ENCODE measurements at regions of chr3 and their contacts with region 1.

Region 1: DNA sequence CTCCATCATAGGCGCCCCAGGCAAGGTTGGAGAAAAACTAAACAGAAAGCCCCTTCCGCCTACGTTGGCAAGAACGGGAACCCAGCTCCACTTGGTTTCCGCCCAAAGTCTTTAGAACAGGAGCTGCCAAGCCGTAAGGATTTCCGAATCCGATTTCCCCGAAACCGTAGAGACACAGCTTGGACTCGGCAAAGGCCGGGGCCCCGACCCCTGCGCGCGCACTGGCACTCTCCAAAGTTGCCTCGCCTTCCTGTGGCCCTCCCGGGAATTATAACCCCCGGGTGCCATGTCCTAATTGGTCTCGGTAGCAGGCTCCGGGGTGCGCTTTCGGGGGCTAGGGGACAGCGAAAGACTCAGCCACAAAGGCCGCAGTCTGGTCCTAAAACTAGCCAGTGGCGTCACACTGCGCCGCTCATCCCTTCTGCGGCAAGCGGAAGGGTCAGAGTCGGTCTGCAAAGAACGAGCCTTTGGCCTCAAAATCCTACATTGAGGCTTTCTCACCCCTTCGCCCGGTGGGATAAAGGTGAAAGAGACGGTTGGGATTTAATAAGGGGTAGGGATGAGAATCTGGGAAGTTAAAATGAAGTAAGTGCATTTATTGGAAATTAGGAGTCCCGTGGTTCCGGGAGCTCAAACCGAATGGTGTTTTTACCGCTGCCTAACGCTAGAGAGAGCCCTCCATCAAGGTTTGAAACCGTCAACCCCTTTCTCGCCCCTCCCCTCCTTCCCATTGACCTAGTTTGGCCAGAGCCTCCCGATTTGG is 6.8 kb downstream of the BCL6 start:
- DNase-seq: peak; percentile 92 to 93
- ATAC-seq: peak; percentile 34 to 37
- H3K4me3 ChIP-seq: peak overlapping the region; percentile 70 to 94 (median 88)
- H3K27ac ChIP-seq: peak overlapping the region; percentile 95 to 100 (median 98)
- H3K4me1 ChIP-seq: peaks cover 40% of the 10 kb centered on the region in 2 donors
- H3K27me3 ChIP-seq: no peaks in the 10 kb centered on the region
- CTCF ChIP-seq: peak; percentile 66 to 82 (median 72)
- POLR2A ChIP-seq: peak; percentile 54 to 64

Region 2: GRCh38 chr3:187947927-187948682 is 209.6 kb after region 1 on chr3:
- in situ Hi-C with region 1: no loop called
- intact Hi-C with region 1: loop called (anchors 2 kb)
- DNase-seq: peak; percentile 74 to 92
- ATAC-seq: peak; percentile 89 to 91
- H3K4me3 ChIP-seq: no peak overlapping the region
- H3K27ac ChIP-seq: peak overlapping the region; percentile 77 to 88 (median 86)
- H3K4me1 ChIP-seq: peaks cover 50 to 58% of the 10 kb centered on the region in 2 donors
- H3K27me3 ChIP-seq: no peaks in the 10 kb centered on the region
- CTCF ChIP-seq: no peak
- POLR2A ChIP-seq: no peak

Region 3: DNA sequence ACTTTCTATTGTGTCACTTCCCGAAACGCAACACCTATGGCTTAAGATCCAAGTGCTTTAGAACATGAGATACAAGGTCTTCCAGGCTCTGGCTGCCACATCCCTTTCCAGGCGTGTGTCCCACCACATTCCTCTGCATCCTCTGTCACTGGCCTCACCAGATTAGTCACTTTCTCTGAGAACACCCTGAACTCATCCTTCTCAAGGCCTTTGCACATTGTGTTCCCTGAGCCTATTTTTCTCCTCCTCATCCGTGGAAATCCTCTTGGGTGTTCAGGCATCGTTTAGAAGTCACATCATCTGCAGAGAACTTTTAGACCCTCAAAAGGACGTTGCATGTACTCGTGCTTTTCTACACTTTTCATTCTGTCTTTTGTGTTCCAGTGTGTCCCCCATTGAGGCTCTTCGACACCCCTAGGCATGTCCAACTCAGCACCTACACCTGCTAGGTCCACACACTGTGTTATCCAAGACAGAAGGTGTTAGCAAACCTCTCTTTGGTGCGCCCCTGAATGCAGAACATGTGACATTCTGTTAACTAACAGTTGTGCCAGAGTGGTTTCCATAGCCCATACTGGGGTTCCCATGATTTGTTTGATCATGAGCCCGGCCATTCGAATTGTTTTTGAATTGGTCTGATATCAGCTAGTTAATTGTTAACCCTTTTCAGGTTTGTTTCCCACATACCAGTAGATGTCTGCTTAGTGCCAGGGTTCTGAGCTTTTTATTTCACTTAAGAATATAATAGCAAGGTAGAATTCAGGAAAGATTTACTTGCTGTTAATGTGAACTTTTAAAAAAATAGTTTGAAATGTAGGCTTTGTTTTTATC is 482.7 kb after region 1 on chr3:
- in situ Hi-C with region 1: loop called in 2 of 4 experiments (anchors 25 kb)
- intact Hi-C with region 1: loop called (anchors 2 kb)
- DNase-seq: peak; percentile 95 to 98
- ATAC-seq: peak; percentile 93 to 95
- H3K4me3 ChIP-seq: no peak overlapping the region
- H3K27ac ChIP-seq: peak overlapping the region; percentile 91 to 97 (median 93)
- H3K4me1 ChIP-seq: peaks cover 70% of the 10 kb centered on the region in 2 donors
- H3K27me3 ChIP-seq: no peaks in the 10 kb centered on the region
- CTCF ChIP-seq: no peak
- POLR2A ChIP-seq: peak; percentile 56 to 77

Region 4: DNA sequence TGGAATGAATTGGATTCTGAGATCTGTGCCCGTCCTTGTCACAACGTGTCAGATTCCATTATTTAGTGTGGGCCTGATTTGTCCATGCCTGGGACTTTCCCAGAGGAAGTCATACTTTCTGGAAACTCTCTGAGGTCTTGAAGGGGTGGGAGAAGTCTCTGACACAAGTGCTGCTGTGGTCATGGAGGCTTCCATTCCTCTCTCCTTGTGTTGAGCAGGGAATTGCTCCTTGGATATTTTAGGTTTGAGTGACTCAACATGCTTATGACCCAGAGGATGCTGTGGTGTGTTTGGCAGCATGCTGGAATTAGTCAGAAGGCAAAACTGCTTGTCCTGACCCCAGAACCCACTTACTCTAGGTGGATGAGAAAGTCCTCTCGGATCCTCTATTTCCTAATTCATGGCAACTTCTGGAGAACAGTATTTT is 547.6 kb after region 1 on chr3:
- in situ Hi-C with region 1: loop called in 1 of 4 experiments (anchors 25 kb)
- intact Hi-C with region 1: loop called (anchors 5 kb)
- DNase-seq: peak; percentile 88 to 92
- ATAC-seq: peak; percentile 97 to 98
- H3K4me3 ChIP-seq: no peak overlapping the region
- H3K27ac ChIP-seq: peak overlapping the region; percentile 82 to 99 (median 90)
- H3K4me1 ChIP-seq: peaks cover 46 to 51% of the 10 kb centered on the region in 2 donors
- H3K27me3 ChIP-seq: no peaks in the 10 kb centered on the region
- CTCF ChIP-seq: no peak
- POLR2A ChIP-seq: peak; percentile 59 to 81

Region 5: GRCh38 chr3:188554404-188554803 is 815.9 kb after region 1 on chr3:
- in situ Hi-C with region 1: loop called in 1 of 4 experiments (anchors 25 kb)
- intact Hi-C with region 1: loop called (anchors 2 kb)
- DNase-seq: peak; percentile 83 to 85
- ATAC-seq: peak; percentile 97
- H3K4me3 ChIP-seq: no peak overlapping the region
- H3K27ac ChIP-seq: peak overlapping the region; percentile 65 to 87 (median 78)
- H3K4me1 ChIP-seq: peaks cover 40 to 49% of the 10 kb centered on the region in 2 donors
- H3K27me3 ChIP-seq: no peaks in the 10 kb centered on the region
- CTCF ChIP-seq: no peak
- POLR2A ChIP-seq: no peak

Region 6: DNA sequence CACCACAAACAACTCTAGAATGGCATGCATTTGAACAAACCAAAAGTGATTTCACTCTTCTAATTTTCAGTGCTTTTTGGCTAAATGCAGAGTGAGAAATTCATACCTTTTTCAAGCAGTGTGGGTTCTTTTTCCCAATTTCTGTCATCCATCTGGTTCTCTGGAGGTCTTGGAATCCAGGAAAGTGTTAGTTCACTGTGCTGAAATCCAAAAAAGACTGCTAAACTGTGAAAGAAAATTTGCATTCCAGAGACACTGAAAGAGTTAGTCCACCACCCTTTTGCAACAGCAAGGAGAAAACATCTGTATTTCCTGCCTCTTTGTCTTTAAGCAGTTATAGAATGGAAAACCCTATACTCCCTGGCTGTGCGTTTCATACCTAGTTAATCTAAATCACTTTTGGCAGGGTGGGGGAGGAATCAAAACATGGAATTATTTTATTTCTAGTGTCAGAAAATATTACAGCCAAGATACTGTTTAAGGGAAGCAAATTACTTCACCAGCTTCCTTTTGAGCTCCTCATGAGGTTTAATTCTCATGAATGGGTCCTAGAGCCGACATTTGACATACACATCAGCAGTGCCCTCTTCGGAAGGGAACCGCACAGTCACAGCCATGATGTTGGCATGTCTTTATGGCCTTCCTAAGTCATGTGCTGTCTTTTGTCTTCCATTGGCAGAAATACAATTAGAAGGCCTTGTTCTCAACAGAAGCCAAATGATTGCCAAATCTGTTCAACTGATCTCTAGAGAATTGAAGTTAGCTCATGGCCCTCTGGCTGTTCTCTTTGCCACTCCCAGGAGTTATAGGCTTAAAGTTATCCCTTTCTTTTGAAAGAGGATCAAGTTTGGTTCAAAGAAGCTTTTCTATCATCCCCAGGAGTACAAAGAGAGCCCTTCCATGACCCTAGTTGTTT is 1115.6 kb after region 1 on chr3:
- in situ Hi-C with region 1: no loop called
- intact Hi-C with region 1: loop called (anchors 2 kb)
- DNase-seq: peak; percentile 35 to 72
- ATAC-seq: peak; percentile 93 to 96
- H3K4me3 ChIP-seq: no peak overlapping the region
- H3K27ac ChIP-seq: peak overlapping the region; percentile 71 to 83 (median 80)
- H3K4me1 ChIP-seq: peaks cover 11 to 37% of the 10 kb centered on the region in 2 donors
- H3K27me3 ChIP-seq: no peaks in the 10 kb centered on the region
- CTCF ChIP-seq: peak in 1 of 5 experiments; percentile 22
- POLR2A ChIP-seq: no peak